ENCODE measurements at regions of chr2 and their contacts with region 1.

Region 1: GRCh38 chr2:187499941-187500532 is 52.0 kb upstream of the CALCRL start:
- DNase-seq: peak in 4 of 9 experiments; percentile 7 to 38 (median 22)
- ATAC-seq: no peak
- H3K4me3 ChIP-seq: no peak overlapping the region
- H3K4me3 Mint-ChIP-seq: no peak overlapping the region
- H3K27ac ChIP-seq: no peak overlapping the region
- H3K27ac Mint-ChIP-seq: no peak overlapping the region
- H3K4me1 ChIP-seq: no peaks in the 10 kb centered on the region
- H3K4me1 Mint-ChIP-seq: peaks cover 8% of the 10 kb centered on the region
- H3K27me3 ChIP-seq: no peaks in the 10 kb centered on the region
- H3K27me3 Mint-ChIP-seq: peaks cover 2% of the 10 kb centered on the region
- CTCF ChIP-seq: peak; percentile 67

Region 2: GRCh38 chr2:186205254-186205911 is 1294.7 kb before region 1 on chr2:
- CTCF ChIA-PET with region 1: no interaction called
- POLR2A ChIA-PET with region 1: no interaction called
- intact Hi-C with region 1: no loop called
- DNase-seq: no peak
- ATAC-seq: no peak
- H3K4me3 ChIP-seq: no peak overlapping the region
- H3K4me3 Mint-ChIP-seq: no peak overlapping the region
- H3K27ac ChIP-seq: no peak overlapping the region
- H3K27ac Mint-ChIP-seq: no peak overlapping the region
- H3K4me1 ChIP-seq: no peaks in the 10 kb centered on the region
- H3K4me1 Mint-ChIP-seq: peaks cover 2% of the 10 kb centered on the region
- H3K27me3 ChIP-seq: no peaks in the 10 kb centered on the region
- H3K27me3 Mint-ChIP-seq: no peaks in the 10 kb centered on the region
- CTCF ChIP-seq: no peak

Region 3: DNA sequence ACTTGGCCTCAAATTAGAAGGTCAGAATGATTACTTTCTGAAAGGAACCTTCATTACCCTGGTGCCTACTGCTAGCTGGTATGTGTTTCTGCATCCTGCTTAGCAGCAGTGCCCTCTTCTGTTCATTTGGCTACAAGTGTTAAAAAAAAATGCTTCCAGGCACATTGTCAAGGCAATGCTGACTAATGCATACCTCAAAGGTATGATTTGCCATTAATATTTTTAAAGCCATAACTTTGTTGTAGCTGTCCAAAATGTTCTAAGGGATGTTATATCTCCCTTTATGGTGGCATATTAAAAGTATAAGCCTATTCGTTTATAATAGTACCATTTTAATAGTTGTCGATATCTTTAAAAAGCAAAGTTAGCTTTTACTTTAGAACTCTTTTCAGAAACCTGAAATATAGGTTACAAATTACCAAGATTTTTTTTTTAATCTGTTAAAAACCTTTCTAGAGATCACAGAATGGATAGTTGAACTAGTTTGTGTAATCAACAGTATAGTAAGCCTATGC is 858.2 kb before region 1 on chr2:
- CTCF ChIA-PET with region 1: no interaction called
- POLR2A ChIA-PET with region 1: no interaction called
- intact Hi-C with region 1: no loop called
- DNase-seq: peak in 6 of 9 experiments; percentile 9 to 62 (median 17)
- ATAC-seq: peak; percentile 73
- H3K4me3 ChIP-seq: no peak overlapping the region
- H3K4me3 Mint-ChIP-seq: no peak overlapping the region
- H3K27ac ChIP-seq: no peak overlapping the region
- H3K27ac Mint-ChIP-seq: no peak overlapping the region
- H3K4me1 ChIP-seq: no peaks in the 10 kb centered on the region
- H3K4me1 Mint-ChIP-seq: peaks cover 1% of the 10 kb centered on the region
- H3K27me3 ChIP-seq: no peaks in the 10 kb centered on the region
- H3K27me3 Mint-ChIP-seq: no peaks in the 10 kb centered on the region
- CTCF ChIP-seq: peak; percentile 59

Region 4: DNA sequence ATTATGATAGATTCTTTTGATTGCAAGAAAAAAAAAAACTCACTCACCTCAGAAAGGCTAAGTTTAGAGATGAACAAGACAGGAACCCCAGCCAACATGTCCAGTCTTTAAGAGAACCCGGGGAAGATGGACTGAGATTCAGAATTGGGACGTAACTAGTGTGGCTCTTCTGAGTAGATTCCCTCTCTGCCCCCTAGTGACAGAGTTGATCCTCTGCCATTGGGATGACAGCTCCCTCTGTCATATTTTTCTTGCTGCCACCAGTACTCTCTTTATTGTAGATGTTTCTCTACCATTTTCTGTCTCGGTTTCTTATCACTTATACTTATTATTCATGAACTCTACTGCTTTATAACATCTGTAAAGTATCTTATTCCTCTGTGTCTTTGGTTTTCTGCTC is 869.3 kb after region 1 on chr2:
- CTCF ChIA-PET with region 1: no interaction called
- POLR2A ChIA-PET with region 1: no interaction called
- intact Hi-C with region 1: loop called in 1 of 2 experiments (anchors 5 kb)
- DNase-seq: peak in 1 of 9 experiments; percentile 21
- ATAC-seq: no peak
- H3K4me3 ChIP-seq: no peak overlapping the region
- H3K4me3 Mint-ChIP-seq: no peak overlapping the region
- H3K27ac ChIP-seq: no peak overlapping the region
- H3K27ac Mint-ChIP-seq: no peak overlapping the region
- H3K4me1 ChIP-seq: no peaks in the 10 kb centered on the region
- H3K4me1 Mint-ChIP-seq: no peaks in the 10 kb centered on the region
- H3K27me3 ChIP-seq: no peaks in the 10 kb centered on the region
- H3K27me3 Mint-ChIP-seq: no peaks in the 10 kb centered on the region
- CTCF ChIP-seq: no peak

Region 5: GRCh38 chr2:188512456-188512855 is 1012.4 kb after region 1 on chr2:
- CTCF ChIA-PET with region 1: no interaction called
- POLR2A ChIA-PET with region 1: no interaction called
- intact Hi-C with region 1: loop called (anchors 5 to 10 kb)
- DNase-seq: peak in 1 of 9 experiments; percentile 18
- ATAC-seq: no peak
- H3K4me3 ChIP-seq: no peak overlapping the region
- H3K4me3 Mint-ChIP-seq: no peak overlapping the region
- H3K27ac ChIP-seq: no peak overlapping the region
- H3K27ac Mint-ChIP-seq: no peak overlapping the region
- H3K4me1 ChIP-seq: no peaks in the 10 kb centered on the region
- H3K4me1 Mint-ChIP-seq: no peaks in the 10 kb centered on the region
- H3K27me3 ChIP-seq: no peaks in the 10 kb centered on the region
- H3K27me3 Mint-ChIP-seq: no peaks in the 10 kb centered on the region
- CTCF ChIP-seq: no peak

Region 6: GRCh38 chr2:189347540-189347939 is 1847.5 kb after region 1 on chr2:
- CTCF ChIA-PET with region 1: no interaction called
- POLR2A ChIA-PET with region 1: no interaction called
- intact Hi-C with region 1: loop called in 1 of 2 experiments (anchors 10 kb)
- DNase-seq: peak in 3 of 9 experiments; percentile 9 to 61 (median 52)
- ATAC-seq: peak; percentile 38
- H3K4me3 ChIP-seq: no peak overlapping the region
- H3K4me3 Mint-ChIP-seq: no peak overlapping the region
- H3K27ac ChIP-seq: no peak overlapping the region
- H3K27ac Mint-ChIP-seq: no peak overlapping the region
- H3K4me1 ChIP-seq: peaks cover 3% of the 10 kb centered on the region
- H3K4me1 Mint-ChIP-seq: peaks cover 16% of the 10 kb centered on the region
- H3K27me3 ChIP-seq: no peaks in the 10 kb centered on the region
- H3K27me3 Mint-ChIP-seq: no peaks in the 10 kb centered on the region
- CTCF ChIP-seq: peak; percentile 33

Region 7: DNA sequence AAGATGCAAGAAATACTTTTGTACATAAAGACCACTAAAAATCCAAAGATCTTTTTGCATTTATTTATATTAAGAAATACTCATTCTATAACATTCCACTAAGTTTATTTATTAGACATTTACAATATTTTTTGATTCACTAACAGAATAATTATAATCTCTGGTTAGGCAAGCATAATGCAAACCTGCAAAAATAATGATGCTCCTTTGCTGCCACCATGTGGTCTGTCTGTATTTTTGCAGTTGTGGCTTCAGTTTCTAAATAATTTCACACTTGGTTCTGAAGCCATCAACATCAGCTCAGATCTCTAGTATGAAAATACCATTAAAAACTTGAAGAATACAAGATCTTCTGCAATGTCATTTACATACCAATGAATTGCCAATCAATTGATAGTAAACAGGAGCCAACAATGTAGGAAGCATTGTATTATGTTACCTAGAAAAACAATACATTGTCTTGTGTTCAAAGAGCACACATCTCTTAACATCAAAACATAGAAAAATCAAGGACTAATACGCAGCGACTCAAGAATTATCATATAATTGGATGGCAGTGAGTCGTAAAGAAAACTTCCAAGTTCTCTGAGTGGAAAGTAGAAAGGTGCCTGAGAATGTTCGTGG is 1912.4 kb after region 1 on chr2:
- CTCF ChIA-PET with region 1: no interaction called
- POLR2A ChIA-PET with region 1: no interaction called
- intact Hi-C with region 1: loop called in 1 of 2 experiments (anchors 2 kb)
- DNase-seq: peak in 7 of 9 experiments; percentile 29 to 68 (median 52)
- ATAC-seq: no peak
- H3K4me3 ChIP-seq: no peak overlapping the region
- H3K4me3 Mint-ChIP-seq: no peak overlapping the region
- H3K27ac ChIP-seq: no peak overlapping the region
- H3K27ac Mint-ChIP-seq: no peak overlapping the region
- H3K4me1 ChIP-seq: peaks cover 4% of the 10 kb centered on the region
- H3K4me1 Mint-ChIP-seq: peaks cover 7% of the 10 kb centered on the region
- H3K27me3 ChIP-seq: no peaks in the 10 kb centered on the region
- H3K27me3 Mint-ChIP-seq: no peaks in the 10 kb centered on the region
- CTCF ChIP-seq: peak; percentile 86